ENCODE measurements at regions of chr11 and their contacts with region 1.

Region 1: DNA sequence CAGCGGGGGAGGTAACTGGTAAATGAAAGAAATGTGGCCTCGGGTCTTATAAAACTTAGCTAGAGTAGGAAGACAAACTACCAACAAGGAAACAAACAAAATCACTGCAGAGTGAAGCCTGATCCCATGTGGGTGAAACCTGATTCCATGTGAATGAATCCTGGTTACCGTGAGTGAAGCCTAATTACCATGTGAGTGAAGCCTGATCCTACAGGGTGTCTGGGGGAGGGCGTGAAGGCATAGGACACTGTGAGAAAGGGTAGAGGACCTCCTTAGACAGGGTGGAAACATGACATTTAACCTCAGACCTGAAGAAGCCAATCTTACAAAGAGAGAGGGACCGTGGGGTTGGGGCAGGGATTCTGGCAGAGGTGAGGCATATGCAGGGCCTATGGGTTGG is 106.2 kb upstream of the USP47 start:
- DNase-seq: no peak
- ATAC-seq: no peak
- H3K4me3 ChIP-seq: no peak overlapping the region
- H3K27ac ChIP-seq: no peak overlapping the region
- H3K4me1 ChIP-seq: peaks cover 10% of the 10 kb centered on the region
- H3K27me3 ChIP-seq: no peaks in the 10 kb centered on the region
- CTCF ChIP-seq: no peak

Region 2: DNA sequence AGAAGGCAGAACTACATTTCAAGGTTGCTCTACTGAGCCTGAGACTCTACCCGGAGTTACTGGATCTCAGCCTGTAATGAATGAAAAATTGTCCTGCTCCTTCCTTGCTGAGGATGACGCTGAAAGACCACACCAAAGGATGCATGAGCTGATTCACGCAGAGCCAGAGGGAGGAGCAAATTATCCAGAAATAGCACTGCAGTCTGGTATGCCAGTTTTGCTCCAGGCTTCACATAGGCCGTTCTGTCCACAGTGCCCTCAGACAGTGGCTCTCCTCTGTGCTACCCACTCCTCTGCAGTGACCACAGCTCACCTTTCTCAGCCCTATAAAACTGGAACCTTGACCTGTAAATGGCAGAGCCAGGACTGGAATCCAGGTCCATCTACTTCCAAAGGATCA is 34.5 kb before region 1 on chr11:
- CTCF ChIA-PET with region 1: no interaction called
- POLR2A ChIA-PET with region 1: no interaction called
- intact Hi-C with region 1: no loop called
- DNase-seq: peak; percentile 51
- ATAC-seq: peak; percentile 67
- H3K4me3 ChIP-seq: no peak overlapping the region
- H3K27ac ChIP-seq: no peak overlapping the region
- H3K4me1 ChIP-seq: peaks cover 2% of the 10 kb centered on the region; the same call in 1 of the 2 replicates
- H3K27me3 ChIP-seq: no peaks in the 10 kb centered on the region
- CTCF ChIP-seq: no peak; the same call in 1 of the 2 replicates

Region 3: DNA sequence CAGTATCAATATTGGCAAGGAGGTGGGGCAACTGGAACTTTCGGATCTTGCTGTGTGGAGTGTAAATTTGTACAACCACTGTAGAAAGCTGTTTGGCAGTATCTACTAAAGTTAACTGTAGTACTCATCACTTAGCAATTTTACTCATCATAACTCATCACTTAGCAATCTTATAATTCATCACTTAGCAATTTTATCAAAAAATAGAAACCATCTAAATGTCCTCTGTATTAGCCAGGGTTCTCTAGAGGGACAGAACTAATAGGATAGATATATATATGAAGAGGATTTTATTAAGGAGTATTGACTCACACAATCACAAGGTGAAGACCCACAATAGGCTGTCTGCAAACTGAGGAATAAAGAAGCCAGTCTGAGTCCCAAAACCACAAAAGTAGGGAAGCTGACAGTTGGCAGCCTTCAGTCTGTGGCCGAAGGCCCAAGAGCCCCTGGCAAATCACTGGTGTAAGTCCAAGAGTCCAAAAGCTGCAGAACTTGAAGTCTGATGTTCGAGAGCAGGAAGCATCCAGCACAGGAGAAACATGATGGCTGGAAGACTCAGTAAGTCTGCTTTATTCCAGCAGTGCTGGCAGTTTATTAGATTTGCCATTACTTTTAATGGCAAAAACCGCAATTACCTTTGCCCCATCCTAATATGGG is 13.2 kb after region 1 on chr11:
- CTCF ChIA-PET with region 1: no interaction called
- POLR2A ChIA-PET with region 1: no interaction called
- intact Hi-C with region 1: loop called (anchors 1 kb)
- DNase-seq: peak; percentile 82
- ATAC-seq: peak; percentile 81
- H3K4me3 ChIP-seq: 0 out of 2 replicates have a peak overlapping the region, but pooled peaks have one; percentile 3
- H3K27ac ChIP-seq: peak overlapping the region; percentile 47
- H3K4me1 ChIP-seq: peaks cover 37% of the 10 kb centered on the region
- H3K27me3 ChIP-seq: no peaks in the 10 kb centered on the region
- CTCF ChIP-seq: no peak

Region 4: DNA sequence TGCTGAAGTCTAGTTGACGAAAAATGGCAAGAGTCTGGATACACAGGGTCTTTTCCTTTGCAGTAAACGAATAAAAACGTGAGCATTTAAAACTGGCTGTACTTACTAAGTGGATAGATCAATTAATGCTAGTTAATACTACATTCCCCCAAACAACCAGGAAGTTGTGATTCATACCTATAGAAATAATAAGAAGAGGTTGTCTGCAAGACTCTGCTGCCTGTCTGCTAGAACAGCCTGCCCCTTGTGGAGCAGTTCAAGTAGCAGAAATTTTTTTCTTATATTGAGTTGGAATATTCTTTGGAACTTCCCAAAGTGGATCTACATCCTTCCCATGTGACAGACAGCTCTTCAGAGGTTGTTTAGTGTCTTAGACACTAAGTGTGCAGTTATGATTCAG is 1025.4 kb after region 1 on chr11:
- CTCF ChIA-PET with region 1: no interaction called
- POLR2A ChIA-PET with region 1: interaction called, 10 read pairs
- intact Hi-C with region 1: no loop called
- DNase-seq: peak; percentile 48
- ATAC-seq: peak; percentile 85
- H3K4me3 ChIP-seq: no peak overlapping the region
- H3K27ac ChIP-seq: no peak overlapping the region
- H3K4me1 ChIP-seq: peaks cover 10% of the 10 kb centered on the region
- H3K27me3 ChIP-seq: no peaks in the 10 kb centered on the region
- CTCF ChIP-seq: peak; percentile 62

Measured in PC-3 (cell line).